ENCODE measurements at regions of chr17 and their contacts with region 1.

Region 1: DNA sequence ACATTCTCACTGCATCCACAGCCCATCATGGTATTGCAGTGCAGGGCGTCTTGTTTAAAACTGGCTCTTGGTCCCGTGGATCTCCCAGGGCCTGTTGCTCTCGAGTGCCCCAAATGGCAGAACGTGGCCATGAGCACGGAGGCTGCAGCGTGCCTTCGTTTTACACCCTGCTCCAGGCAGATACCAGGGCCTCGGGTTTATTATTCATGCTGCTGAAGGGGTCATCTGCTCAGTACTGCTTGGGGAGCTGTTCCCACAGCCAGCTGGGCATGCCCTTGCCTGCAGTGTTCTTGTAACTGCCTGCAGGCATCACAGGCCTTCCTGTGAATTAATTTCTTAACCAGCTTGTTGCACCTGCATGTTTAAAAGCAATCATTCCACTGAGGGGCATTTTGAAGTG is 129.7 kb upstream of the CHMP6 start:
- DNase-seq: no peak
- ATAC-seq: no peak
- H3K4me3 ChIP-seq: no peak overlapping the region
- H3K27ac ChIP-seq: no peak overlapping the region
- H3K4me1 ChIP-seq: peaks cover 2% of the 10 kb centered on the region
- H3K27me3 ChIP-seq: no peaks in the 10 kb centered on the region
- CTCF ChIP-seq: no peak

Region 2: GRCh38 chr17:80575057-80575875 is 286.6 kb before region 1 on chr17:
- CTCF ChIA-PET with region 1: no interaction called
- POLR2A ChIA-PET with region 1: no interaction called
- in situ Hi-C with region 1: no loop called
- intact Hi-C with region 1: no loop called
- DNase-seq: peak; percentile 80
- ATAC-seq: peak; percentile 100
- H3K4me3 ChIP-seq: no peak overlapping the region
- H3K27ac ChIP-seq: no peak overlapping the region
- H3K4me1 ChIP-seq: no peaks in the 10 kb centered on the region
- H3K27me3 ChIP-seq: no peaks in the 10 kb centered on the region
- CTCF ChIP-seq: peak; percentile 100

Region 3: GRCh38 chr17:80899402-80900268 is 37.7 kb after region 1 on chr17:
- CTCF ChIA-PET with region 1: no interaction called
- POLR2A ChIA-PET with region 1: no interaction called
- in situ Hi-C with region 1: loop called (anchors 5 kb)
- intact Hi-C with region 1: no loop called
- DNase-seq: no peak
- ATAC-seq: peak; percentile 68; the same call in 1 of the 2 replicates
- H3K4me3 ChIP-seq: no peak overlapping the region
- H3K27ac ChIP-seq: no peak overlapping the region
- H3K4me1 ChIP-seq: no peaks in the 10 kb centered on the region
- H3K27me3 ChIP-seq: no peaks in the 10 kb centered on the region
- CTCF ChIP-seq: no peak; the same call in 1 of the 2 replicates

Measured in Panc1 (cell line).